ENCODE measurements at regions of chr1 and their contacts with region 1.

Region 1: DNA sequence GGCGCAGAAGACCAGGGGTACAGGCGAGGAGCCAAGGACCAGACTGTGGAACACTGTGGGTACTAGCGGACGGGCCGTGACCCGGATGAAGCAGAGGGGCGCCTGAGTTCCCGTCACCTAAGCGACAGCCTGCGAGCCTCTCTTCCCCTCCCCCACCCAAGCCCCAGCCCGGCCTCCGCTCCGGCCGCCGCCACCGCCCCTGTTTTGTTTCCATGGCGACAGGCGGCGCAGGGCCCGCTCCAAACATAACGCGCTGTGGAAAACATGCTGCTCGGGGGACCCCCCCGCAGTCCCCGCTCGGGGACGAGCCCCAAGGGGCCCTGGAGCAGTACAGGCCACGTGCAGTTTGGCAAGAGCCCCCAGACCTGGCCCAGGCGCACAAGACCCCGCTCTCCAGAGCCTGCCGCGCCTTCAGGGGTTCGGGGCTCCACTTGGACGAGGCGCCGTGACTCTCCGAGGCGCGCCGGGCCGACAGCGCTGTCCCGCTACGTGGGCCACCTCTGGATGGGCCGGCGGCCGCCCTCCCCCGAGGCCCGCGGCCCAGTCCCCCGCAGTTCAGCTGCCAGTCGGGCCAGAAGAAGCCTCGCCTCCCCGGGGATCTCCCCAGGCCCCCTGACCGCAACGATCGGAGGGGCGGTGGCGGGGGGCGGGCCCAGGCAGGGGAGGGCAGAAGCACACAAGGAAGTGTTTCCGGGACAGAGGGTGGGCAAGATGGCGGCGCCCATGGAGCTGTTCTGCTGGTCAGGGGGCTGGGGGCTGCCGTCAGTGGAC is at the start of gene MTX1:
- DNase-seq: peak; percentile 75
- H3K27ac ChIP-seq: peak within 1 kb of the TSS; percentile 94
- CTCF ChIP-seq: no peak

Region 2: GRCh38 chr1:155038602-155039307 is 170.0 kb before region 1 on chr1:
- CTCF ChIA-PET with region 1: no interaction called
- POLR2A ChIA-PET with region 1: no interaction called
- DNase-seq: peak; percentile 78
- H3K27ac ChIP-seq: peak overlapping the region; percentile 81
- CTCF ChIP-seq: no peak

Region 3: DNA sequence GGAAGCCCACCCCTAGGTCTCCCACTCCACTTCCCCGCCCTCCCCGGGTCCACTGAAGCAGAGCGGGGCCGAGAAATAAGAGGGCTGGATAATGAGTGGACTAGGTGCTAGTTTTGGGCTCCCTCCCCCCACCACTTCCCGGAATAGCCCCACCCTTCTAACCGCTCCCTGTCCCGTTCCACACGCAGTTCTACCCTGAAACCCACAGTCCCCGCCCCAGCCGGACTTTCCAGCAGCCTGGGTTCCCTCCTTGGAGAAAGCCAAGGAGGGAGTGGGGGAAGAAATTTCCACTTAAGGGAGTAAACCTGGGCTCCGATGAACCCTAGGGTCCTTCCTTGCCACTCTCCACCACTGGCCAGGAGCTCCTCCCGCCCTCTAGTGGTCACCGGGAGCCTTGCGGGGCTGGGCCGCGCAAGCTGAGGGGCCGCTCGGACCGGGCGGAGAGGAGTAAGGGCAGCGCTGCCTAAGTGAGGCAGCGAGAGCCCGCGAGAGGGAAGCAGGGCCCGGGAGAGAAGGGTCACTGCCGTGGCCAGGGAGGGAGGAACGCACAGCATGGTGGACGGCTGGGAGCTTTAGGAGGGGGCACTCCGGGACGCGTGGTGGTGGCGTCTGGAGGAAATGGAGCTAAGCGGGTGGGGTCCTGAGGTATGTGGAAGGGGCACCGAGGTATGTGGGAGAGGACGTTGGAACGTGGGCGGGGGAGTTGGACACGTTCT is 15.3 kb before region 1 on chr1:
- CTCF ChIA-PET with region 1: interaction called, 14 read pairs
- POLR2A ChIA-PET with region 1: interaction called, 3 read pairs
- DNase-seq: peak; percentile 87
- H3K27ac ChIP-seq: peak overlapping the region; percentile 99
- CTCF ChIP-seq: peak; percentile 97

Region 4: DNA sequence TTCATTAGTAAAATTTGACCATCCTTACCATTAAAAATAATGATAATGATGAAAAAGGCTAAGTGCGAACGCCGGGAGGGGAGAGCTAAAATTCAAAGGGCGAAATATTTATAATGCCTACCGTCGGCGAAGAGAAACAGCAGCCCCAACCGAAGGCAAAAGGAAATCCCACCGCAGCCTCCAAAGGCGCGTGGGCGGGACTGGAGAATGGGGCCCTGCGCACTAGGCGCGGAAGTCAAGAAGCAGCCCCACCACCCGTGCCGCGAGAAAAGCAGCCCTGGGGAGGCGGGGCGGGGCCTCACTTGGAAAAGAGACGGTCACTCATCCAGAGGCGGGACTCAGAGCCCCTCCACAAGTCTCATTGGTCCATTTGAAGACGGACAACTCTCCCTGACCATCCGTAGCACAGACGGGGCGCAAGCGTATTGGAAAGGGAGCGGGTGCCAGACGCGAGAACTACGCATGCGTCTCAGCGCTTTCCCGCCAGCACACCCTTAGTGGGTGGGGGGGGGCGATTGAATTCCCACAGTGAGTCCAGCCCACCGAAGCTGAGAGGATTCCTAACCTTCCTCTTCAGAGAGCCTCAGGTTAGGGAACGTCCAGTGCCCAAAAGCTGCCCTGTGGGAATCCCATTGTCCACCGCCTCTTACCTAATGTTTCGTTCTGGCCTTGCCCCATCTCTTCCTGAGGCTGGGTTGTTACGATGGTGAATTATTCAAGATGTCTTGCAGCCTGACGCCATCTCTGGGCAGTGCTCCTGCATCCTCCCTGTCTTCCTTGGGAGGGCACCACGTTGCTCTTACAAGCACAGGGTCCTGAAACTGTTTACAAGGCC is 18.8 kb after region 1 on chr1:
- CTCF ChIA-PET with region 1: interaction called, 22 read pairs
- POLR2A ChIA-PET with region 1: interaction called, 3 read pairs
- DNase-seq: peak; percentile 100
- H3K27ac ChIP-seq: peak overlapping the region; percentile 90
- CTCF ChIP-seq: no peak